ENCODE measurements at regions of chr1 and their contacts with region 1.

Region 1: DNA sequence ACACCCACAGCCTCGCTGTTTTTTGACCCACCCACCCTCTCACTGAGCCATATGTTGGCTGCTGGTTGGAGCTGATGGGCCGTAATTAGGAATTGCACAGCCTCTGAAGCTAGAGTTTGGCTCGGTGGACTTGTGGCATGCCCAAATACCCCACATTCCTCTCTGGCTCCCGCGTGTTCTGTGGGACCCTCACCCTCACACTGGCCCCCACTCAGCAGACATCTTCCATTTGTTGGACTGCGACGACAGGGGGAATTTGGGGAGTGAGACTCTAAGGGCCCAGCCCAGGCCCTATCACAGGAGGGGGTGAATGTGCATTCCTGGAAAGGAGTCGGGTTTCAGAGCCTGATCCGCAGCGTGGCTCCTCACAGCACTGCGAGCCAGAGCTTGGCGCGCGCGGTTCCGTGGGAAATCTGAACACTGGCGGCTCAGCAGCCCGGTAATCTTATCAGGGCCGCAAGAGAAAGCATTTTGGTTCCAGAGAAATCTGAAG is 5.2 kb downstream of the RCSD1 start:
- DNase-seq: no peak
- ATAC-seq: no peak
- H3K4me3 Mint-ChIP-seq: no peak overlapping the region
- H3K27ac Mint-ChIP-seq: no peak overlapping the region
- H3K4me1 Mint-ChIP-seq: peaks cover 80% of the 10 kb centered on the region
- H3K27me3 Mint-ChIP-seq: no peaks in the 10 kb centered on the region

Region 2: DNA sequence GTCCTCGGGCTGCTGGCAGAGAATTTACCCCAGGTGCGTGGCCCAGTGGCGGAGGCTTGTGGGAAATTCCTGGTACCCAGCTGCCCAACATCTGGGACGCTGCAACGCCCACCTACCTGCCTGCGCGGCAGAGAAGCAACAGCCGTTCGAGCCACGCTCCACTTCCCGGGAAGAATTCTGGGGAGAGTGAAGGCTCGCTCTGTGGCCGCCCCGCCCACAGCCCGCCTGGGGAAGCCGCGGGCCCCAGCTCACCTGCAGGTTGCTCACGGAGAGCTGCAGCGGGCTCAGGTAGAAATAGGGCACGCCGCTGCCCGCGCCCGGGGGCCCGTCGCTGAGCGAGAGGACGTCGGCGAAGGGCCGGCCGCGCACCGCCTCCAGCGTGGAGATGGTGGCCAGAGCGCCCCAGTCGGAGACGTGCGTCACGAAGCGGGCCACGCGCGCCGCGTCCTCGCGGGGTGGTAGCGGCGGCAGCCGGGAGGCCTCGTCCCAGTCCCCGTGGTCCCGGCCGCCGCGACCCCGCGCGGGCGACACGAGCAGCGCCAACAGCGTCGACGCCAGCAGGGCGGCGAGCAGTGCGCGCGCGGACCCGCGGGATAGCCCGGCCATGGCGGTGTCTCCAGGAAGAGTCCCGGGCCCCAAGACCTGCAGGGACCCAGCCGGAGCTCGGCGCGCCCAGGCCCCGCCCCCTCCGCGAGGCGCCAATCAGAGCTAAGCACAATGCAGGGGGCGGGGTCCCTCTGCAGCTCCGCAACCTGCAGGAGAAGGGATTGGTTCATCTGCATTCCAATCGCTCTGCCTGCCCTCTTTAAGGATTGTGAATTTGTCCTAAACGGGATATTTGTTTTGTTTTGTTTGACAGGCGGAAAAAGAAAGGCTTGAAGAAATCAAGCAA is 81.8 kb before region 1 on chr1 and contains the start of gene CREG1:
- CTCF ChIA-PET with region 1: interaction called, 11 read pairs
- POLR2A ChIA-PET with region 1: no interaction called
- DNase-seq: peak; percentile 90
- ATAC-seq: peak; percentile 100
- H3K4me3 Mint-ChIP-seq: peak within 1 kb of the TSS; percentile 84
- H3K27ac Mint-ChIP-seq: peak within 1 kb of the TSS; percentile 47
- H3K4me1 Mint-ChIP-seq: peaks cover 28% of the 10 kb centered on the region
- H3K27me3 Mint-ChIP-seq: peaks cover 9% of the 10 kb centered on the region
- total RNA-seq, gene CREG1: 7.3 to 7.7 TPM

Region 3: DNA sequence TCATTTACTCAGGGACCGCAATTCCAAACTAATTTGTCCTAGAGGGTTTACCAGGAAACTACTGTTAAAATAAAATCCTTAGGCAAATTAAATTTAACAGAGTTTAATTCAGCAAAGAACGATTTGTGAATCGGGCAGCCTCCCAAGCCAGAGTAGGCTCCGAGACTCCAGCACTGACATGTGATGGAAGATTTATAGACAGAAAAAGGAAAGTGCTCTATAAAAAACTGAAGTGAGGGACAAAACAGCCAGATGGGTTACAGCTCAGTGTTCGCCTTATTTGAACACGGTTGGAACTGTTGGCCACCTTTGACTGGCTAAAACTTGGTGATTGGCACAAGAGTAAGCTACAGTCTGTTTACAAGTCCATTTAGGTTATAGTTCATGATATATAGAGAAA is 40.4 kb before region 1 on chr1:
- CTCF ChIA-PET with region 1: interaction called, 334 read pairs
- POLR2A ChIA-PET with region 1: interaction called, 96 read pairs
- DNase-seq: no peak
- ATAC-seq: no peak
- H3K4me3 Mint-ChIP-seq: no peak overlapping the region
- H3K27ac Mint-ChIP-seq: no peak overlapping the region
- H3K4me1 Mint-ChIP-seq: peaks cover 11% of the 10 kb centered on the region
- H3K27me3 Mint-ChIP-seq: peaks cover 7% of the 10 kb centered on the region

Region 4: DNA sequence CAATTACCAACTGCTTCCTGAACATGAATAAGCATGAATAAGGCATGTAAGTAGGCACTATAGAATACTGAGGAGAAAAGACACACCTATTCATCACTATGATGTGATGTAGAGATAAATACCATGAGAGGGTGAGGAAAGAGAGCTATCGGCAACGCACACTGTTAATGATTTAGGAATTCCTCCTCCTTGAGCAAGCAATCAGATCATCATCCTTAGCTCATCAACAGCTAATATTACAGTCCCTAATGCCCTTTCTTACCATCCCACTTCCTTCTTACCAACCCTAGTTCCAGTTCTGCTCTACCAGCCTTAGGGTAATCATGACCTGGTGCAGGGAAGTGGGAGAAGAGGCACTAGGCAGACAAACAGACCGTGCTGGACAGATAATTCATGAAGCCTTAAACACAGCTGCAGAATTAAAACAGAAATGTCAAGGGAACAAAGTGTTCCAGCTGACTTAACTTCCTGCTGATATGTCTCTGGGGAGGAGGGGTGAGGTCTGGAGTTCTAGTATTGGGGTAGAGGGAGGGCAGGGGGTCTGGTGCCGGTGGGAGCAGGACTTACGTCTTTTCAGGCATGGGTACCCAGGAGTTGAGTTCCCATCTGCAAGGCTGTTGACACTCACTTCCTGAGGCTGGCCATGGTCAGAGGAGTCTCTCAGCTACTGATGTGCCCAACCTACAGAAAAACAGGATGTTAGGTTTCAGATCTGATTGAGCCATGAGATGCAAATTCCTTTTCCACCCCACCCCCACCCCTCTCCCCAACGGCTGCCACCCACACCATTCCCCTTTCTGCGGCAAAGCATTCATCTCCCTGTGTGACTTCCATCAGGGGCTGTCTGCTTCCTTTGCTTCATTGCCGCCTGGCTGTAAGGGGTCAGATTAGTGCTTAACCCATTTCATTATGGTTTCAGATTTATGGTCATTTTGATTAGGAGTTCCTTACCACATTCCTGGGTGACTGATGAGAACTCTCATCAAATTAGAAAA is 17.8 kb before region 1 on chr1:
- CTCF ChIA-PET with region 1: interaction called, 17 read pairs
- POLR2A ChIA-PET with region 1: interaction called, 47 read pairs
- DNase-seq: peak; percentile 45
- ATAC-seq: peak; percentile 86
- H3K4me3 Mint-ChIP-seq: peak overlapping the region; percentile 68
- H3K27ac Mint-ChIP-seq: peak overlapping the region; percentile 95
- H3K4me1 Mint-ChIP-seq: peaks cover 58% of the 10 kb centered on the region
- H3K27me3 Mint-ChIP-seq: no peaks in the 10 kb centered on the region

Region 5: DNA sequence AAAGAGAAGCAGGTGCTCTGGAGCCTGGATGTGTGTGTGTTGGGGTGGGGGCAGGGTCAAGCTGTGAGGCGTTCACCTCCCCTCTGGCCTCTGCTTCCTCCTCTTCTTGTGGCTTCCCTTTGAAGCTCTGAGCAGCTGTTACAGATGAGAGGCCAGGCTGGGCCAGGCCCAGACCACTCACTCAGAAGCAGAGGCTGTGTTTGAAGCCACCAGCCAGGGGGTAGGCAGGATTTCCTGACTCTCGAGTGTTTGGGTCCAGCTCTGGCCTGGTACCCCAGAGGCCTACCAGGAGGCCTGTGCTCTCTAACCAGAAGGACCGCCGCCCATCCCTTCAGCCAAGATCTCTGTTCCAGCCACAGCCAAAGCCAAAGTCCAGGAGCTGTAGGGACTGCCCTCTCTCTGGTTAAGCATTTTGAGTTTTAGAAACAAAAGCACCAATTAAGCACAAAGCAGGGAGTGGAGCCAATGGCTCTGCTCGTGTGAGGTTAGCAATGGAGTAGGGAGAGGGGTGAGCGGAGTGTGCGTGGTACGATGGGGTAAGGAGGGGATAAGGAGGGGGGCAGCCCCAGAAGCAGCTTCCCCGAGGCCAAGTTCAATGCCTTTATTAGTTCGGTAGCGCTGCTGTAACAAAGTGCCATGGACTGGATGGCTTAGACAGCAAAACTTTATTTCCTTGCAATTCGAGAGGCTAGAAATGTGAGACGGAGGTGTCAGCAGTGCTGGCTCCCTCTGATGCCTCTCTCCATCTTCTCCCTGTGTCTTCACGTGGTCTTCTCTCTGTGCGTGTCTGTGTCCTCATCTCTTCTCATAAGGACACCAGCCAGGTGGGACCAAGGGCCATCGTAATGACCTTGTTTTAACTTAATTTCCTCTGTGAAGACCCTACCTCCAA is 15.3 kb after region 1 on chr1:
- CTCF ChIA-PET with region 1: interaction called, 26 read pairs
- POLR2A ChIA-PET with region 1: interaction called, 6 read pairs
- DNase-seq: peak; percentile 47
- ATAC-seq: peak; percentile 72
- H3K4me3 Mint-ChIP-seq: peak overlapping the region; percentile 38
- H3K27ac Mint-ChIP-seq: peak overlapping the region; percentile 87
- H3K4me1 Mint-ChIP-seq: peaks cover 72% of the 10 kb centered on the region
- H3K27me3 Mint-ChIP-seq: no peaks in the 10 kb centered on the region

Region 6: DNA sequence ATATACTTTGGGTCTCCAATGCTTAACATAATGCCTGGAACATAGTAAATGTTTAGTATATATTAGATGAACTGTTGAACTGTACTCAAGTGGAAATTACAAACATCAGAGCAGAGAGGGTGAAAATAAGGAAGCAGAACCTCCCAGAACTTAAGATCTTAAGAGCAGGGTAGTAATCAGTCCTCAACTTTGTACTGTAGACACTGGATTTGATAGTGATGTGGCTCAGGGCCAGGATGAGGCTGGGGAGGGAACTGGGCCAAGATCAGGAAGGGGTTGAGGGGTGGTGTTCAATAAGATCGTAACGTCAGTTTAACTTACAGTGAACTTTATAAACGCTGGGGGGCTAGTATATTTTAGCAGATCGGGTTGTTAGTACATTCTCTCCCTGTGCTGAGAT is 102.0 kb after region 1 on chr1:
- CTCF ChIA-PET with region 1: no interaction called
- POLR2A ChIA-PET with region 1: no interaction called
- DNase-seq: no peak
- ATAC-seq: no peak
- H3K4me3 Mint-ChIP-seq: no peak overlapping the region
- H3K27ac Mint-ChIP-seq: no peak overlapping the region
- H3K4me1 Mint-ChIP-seq: no peaks in the 10 kb centered on the region
- H3K27me3 Mint-ChIP-seq: no peaks in the 10 kb centered on the region

Region 7: GRCh38 chr1:167770127-167770526 is 134.9 kb after region 1 on chr1:
- CTCF ChIA-PET with region 1: no interaction called
- POLR2A ChIA-PET with region 1: no interaction called
- DNase-seq: no peak
- ATAC-seq: no peak
- H3K4me3 Mint-ChIP-seq: no peak overlapping the region
- H3K27ac Mint-ChIP-seq: no peak overlapping the region
- H3K4me1 Mint-ChIP-seq: peaks cover 6% of the 10 kb centered on the region
- H3K27me3 Mint-ChIP-seq: no peaks in the 10 kb centered on the region